ENCODE measurements at regions of chr1 and their contacts with region 1.

Region 1: DNA sequence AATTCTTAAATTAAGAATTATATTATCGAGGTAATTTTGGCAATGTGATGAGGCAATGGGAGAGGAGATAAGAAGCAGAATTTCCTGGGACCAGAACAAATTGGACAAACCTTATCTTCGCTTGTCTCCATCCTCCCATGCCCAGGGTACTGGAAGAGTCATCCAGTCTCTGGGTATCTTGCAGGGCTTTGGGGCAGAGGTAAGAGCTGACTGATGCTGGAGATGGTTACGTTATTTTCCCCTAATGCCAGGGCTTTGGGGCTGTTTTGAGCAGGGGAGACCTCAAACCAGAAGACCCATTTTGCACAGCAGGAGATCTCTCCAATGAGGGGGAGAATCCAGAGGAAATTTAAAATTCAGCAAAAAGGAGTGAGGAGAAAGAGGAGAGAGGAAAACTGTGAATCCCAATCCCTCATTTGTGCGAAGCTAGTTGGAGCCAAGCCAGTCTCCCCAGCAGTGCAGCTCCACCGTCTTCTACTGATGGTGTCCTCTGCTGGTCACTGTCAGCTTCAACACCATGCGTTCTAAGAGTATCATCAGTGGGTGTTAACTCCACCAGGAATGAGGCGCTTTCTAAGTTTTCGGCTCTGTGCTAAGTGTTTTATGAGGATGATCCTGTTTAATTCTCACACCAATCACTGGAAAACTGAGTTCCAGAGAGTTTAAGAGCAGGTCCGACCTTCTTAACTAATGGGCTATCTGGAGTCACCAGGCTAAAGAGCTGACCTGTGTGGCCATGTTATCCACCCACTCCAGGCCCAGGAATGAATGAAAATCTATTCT is 86.8 kb upstream of the CD34 start:
- DNase-seq: peak; percentile 27
- H3K4me3 ChIP-seq: no peak overlapping the region
- H3K27ac ChIP-seq: no peak overlapping the region
- H3K27me3 ChIP-seq: peaks cover 10% of the 10 kb centered on the region
- CTCF ChIP-seq: peak; percentile 83

Region 2: DNA sequence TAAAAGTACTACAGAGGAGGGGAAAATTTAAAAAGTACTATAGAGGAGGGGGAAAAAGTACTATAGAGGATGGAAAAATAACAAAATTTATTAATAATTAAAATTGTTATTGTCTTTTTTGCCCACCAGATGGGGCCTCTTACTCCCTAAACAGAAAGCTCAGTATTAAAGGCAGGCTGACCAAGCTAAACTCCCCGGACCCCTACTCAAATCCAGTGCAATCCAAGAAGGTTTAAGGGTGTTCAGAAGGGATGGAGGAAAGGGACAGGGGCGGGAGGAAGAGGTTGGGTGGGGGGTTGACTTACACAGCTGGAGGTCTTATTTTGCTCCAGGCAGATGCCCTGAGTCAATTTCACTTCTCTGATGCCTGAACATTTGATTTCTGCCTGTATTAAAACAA is 100.5 kb before region 1 on chr1:
- CTCF ChIA-PET with region 1: interaction called, 11 read pairs
- POLR2A ChIA-PET with region 1: no interaction called
- DNase-seq: no peak
- H3K4me3 ChIP-seq: no peak overlapping the region
- H3K27ac ChIP-seq: no peak overlapping the region
- H3K27me3 ChIP-seq: no peaks in the 10 kb centered on the region
- CTCF ChIP-seq: peak; percentile 42

Region 3: GRCh38 chr1:208007938-208008342 is 10.3 kb after region 1 on chr1:
- CTCF ChIA-PET with region 1: interaction called, 22 read pairs
- POLR2A ChIA-PET with region 1: no interaction called
- DNase-seq: no peak
- H3K4me3 ChIP-seq: no peak overlapping the region
- H3K27ac ChIP-seq: no peak overlapping the region
- H3K27me3 ChIP-seq: no peaks in the 10 kb centered on the region
- CTCF ChIP-seq: no peak

Region 4: GRCh38 chr1:208024406-208024805 is 26.7 kb after region 1 on chr1:
- CTCF ChIA-PET with region 1: interaction called, 25 read pairs
- POLR2A ChIA-PET with region 1: no interaction called
- DNase-seq: no peak
- H3K4me3 ChIP-seq: no peak overlapping the region
- H3K27ac ChIP-seq: no peak overlapping the region
- H3K27me3 ChIP-seq: no peaks in the 10 kb centered on the region
- CTCF ChIP-seq: no peak